Heart left ventricle (tissue), 16 donors: ENCODE measurements at regions of chr1 and their contacts with region 1.

Region 1: GRCh38 chr1:94660994-94661393 is 119.4 kb upstream of the F3 start:
- DNase-seq: no peak
- ATAC-seq: no peak
- H3K4me3 ChIP-seq: no peak overlapping the region
- H3K27ac ChIP-seq: peak overlapping the region in 1 of 12 donors; percentile 3
- H3K4me1 ChIP-seq: peaks cover 0 to 33% (median 6%) of the 10 kb centered on the region in 12 donors
- H3K27me3 ChIP-seq: no peaks in the 10 kb centered on the region
- CTCF ChIP-seq: no peak
- POLR2A ChIP-seq: no peak

Region 2: GRCh38 chr1:94746635-94747525 is 85.9 kb after region 1 on chr1:
- intact Hi-C with region 1: loop called in 3 of 10 experiments (anchors 5 kb)
- DNase-seq: no peak
- ATAC-seq: peak in 3 of 4 donors; percentile 41 to 55 (median 55)
- H3K4me3 ChIP-seq: no peak overlapping the region
- H3K27ac ChIP-seq: peak overlapping the region in 3 of 12 donors; percentile 12 to 30 (median 17)
- H3K4me1 ChIP-seq: peaks cover 0 to 16% (median 0%) of the 10 kb centered on the region in 12 donors
- H3K27me3 ChIP-seq: no peaks in the 10 kb centered on the region
- CTCF ChIP-seq: no peak
- POLR2A ChIP-seq: no peak